ENCODE measurements at regions of chr6 and their contacts with region 1.

Region 1: DNA sequence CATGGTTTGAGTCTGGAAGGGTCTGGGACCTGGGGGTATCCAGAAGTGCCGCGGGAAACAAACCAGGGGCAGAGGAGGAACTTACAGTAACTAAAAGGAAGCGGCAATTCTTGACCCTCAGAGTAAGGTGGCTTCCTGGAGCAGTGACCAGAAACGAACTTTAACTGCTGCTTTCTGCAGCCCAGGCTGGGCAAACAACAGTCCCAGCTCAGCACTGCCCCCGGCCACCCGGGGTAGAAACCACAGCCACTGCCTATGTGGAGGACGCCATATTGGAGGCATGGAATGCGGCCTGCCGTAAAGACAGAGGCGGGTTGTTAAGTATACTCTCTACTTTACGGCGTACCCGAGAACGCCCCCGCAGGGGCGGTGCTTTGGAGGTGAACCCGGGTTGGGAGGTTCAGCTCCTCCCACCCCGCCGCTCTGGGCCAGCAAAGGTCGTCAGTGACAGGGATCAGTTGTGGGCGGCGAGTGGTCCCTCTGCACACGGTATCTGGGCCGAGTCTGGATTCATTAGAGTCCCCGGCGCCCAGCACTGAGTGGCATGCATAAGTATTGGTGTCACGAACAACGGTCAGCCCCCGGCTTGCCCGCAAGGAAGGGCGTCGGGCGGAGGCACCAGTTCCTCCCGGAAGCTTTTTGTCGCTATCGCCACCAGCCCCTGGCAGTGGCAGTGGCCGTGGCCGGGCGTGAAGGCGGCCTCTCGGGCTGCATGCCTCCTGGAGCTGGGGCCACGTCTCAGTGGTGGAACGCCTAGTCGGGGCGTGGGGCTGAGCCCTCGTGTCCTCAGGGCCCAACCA is at the start of gene PDSS2:
- DNase-seq: peak; percentile 93 to 99 (median 96)
- ATAC-seq: peak; percentile 96
- H3K4me3 ChIP-seq: peak within 1 kb of the TSS; percentile 93 to 94
- H3K4me3 Mint-ChIP-seq: peak within 1 kb of the TSS; percentile 98
- H3K27ac ChIP-seq: peak within 1 kb of the TSS; percentile 69 to 82
- H3K27ac Mint-ChIP-seq: peak within 1 kb of the TSS; percentile 98
- H3K4me1 ChIP-seq: peaks cover 14% of the 10 kb centered on the region
- H3K4me1 Mint-ChIP-seq: peaks cover 31% of the 10 kb centered on the region
- H3K27me3 ChIP-seq: no peaks in the 10 kb centered on the region
- H3K27me3 Mint-ChIP-seq: no peaks in the 10 kb centered on the region
- CTCF ChIP-seq: peak; percentile 28
- total RNA-seq, gene PDSS2: 3.7 to 4.7 TPM

Region 2: GRCh38 chr6:106629103-106629858 is 830.2 kb before region 1 on chr6 and contains the starts of genes QRSL1 and RTN4IP1:
- CTCF ChIA-PET with region 1: no interaction called
- POLR2A ChIA-PET with region 1: no interaction called
- intact Hi-C with region 1: loop called in 1 of 2 experiments (anchors 10 kb)
- DNase-seq: peak; percentile 70 to 95 (median 82)
- ATAC-seq: peak; percentile 90
- H3K4me3 ChIP-seq: peak within 1 kb of the TSS; percentile 86 to 93
- H3K4me3 Mint-ChIP-seq: peak within 1 kb of the TSS; percentile 99
- H3K27ac ChIP-seq: peak within 1 kb of the TSS; percentile 83 to 88
- H3K27ac Mint-ChIP-seq: peak within 1 kb of the TSS; percentile 99
- H3K4me1 ChIP-seq: peaks cover 19% of the 10 kb centered on the region
- H3K4me1 Mint-ChIP-seq: peaks cover 43% of the 10 kb centered on the region
- H3K27me3 ChIP-seq: no peaks in the 10 kb centered on the region
- H3K27me3 Mint-ChIP-seq: no peaks in the 10 kb centered on the region
- CTCF ChIP-seq: no peak
- total RNA-seq, gene QRSL1: 11.1 to 11.6 TPM
- total RNA-seq, gene RTN4IP1: 1.8 to 1.9 TPM

Region 3: GRCh38 chr6:107114213-107114905 is 345.1 kb before region 1 on chr6:
- CTCF ChIA-PET with region 1: no interaction called
- POLR2A ChIA-PET with region 1: interaction called, 5 read pairs
- intact Hi-C with region 1: loop called (anchors 2 to 5 kb)
- DNase-seq: peak; percentile 28 to 83 (median 65)
- ATAC-seq: peak; percentile 53
- H3K4me3 ChIP-seq: peak overlapping the region; percentile 12 to 24
- H3K4me3 Mint-ChIP-seq: peak overlapping the region; percentile 83
- H3K27ac ChIP-seq: no peak overlapping the region
- H3K27ac Mint-ChIP-seq: no peak overlapping the region
- H3K4me1 ChIP-seq: peaks cover 11% of the 10 kb centered on the region
- H3K4me1 Mint-ChIP-seq: peaks cover 15% of the 10 kb centered on the region
- H3K27me3 ChIP-seq: peaks cover 0 to 8% of the 10 kb centered on the region in 2 experiments
- H3K27me3 Mint-ChIP-seq: no peaks in the 10 kb centered on the region
- CTCF ChIP-seq: peak; percentile 90

Region 4: GRCh38 chr6:107618672-107619071 is 159.2 kb after region 1 on chr6:
- CTCF ChIA-PET with region 1: no interaction called
- POLR2A ChIA-PET with region 1: interaction called, 6 read pairs
- intact Hi-C with region 1: loop called in 1 of 2 experiments (anchors 1 kb)
- DNase-seq: peak in 8 of 9 experiments; percentile 26 to 82 (median 58)
- ATAC-seq: peak; percentile 95
- H3K4me3 ChIP-seq: no peak overlapping the region
- H3K4me3 Mint-ChIP-seq: peak overlapping the region; percentile 23
- H3K27ac ChIP-seq: peak overlapping the region; percentile 20 to 72
- H3K27ac Mint-ChIP-seq: peak overlapping the region; percentile 84
- H3K4me1 ChIP-seq: peaks cover 37% of the 10 kb centered on the region
- H3K4me1 Mint-ChIP-seq: peaks cover 36% of the 10 kb centered on the region
- H3K27me3 ChIP-seq: no peaks in the 10 kb centered on the region
- H3K27me3 Mint-ChIP-seq: no peaks in the 10 kb centered on the region
- CTCF ChIP-seq: no peak

Region 5: DNA sequence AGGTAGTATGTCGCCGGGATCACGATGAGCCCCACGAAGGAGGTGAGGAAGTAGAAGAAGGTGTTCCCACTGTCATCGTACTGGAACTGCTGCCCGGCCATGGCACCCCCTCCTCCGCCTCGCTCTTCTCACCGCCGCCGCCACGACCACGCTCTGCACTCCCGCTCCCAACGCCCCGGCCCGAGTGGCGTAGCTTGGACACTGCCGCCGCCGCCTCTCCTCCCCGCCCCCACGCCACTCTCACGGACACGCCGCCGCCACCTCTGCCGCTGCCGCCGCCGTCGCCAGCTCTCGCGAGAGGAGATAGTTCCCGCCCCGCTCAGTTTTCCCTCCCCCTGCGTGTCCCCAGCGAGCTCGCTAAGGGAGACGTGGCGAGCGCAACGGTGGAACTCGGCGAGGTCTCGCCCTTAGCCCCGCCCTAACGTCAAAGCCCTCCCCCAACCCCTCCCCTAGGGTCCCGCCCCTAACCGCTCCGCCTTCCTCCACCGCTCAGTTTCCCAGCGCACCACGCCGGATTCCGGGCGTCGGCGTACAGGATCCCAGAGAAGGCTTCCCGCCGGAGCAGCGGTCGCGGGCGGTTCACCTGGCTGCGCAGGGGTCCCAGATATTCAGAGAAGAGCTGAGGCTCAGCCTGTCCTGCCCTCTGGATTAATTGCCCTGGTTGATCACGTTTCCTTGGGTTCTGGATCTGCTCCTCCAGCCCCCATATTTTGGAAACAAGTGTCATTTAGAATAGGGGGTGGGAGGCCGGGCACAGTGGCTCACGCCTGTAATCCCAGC is 498.6 kb after region 1 on chr6 and contains the start of gene SEC63:
- CTCF ChIA-PET with region 1: interaction called, 3 read pairs
- POLR2A ChIA-PET with region 1: no interaction called
- intact Hi-C with region 1: loop called (anchors 1 to 2 kb)
- DNase-seq: peak; percentile 95 to 98 (median 96)
- ATAC-seq: peak; percentile 97
- H3K4me3 ChIP-seq: peak within 1 kb of the TSS; percentile 91
- H3K4me3 Mint-ChIP-seq: peak within 1 kb of the TSS; percentile 98
- H3K27ac ChIP-seq: peak within 1 kb of the TSS; percentile 81 to 82
- H3K27ac Mint-ChIP-seq: peak within 1 kb of the TSS; percentile 92
- H3K4me1 ChIP-seq: peaks cover 16% of the 10 kb centered on the region
- H3K4me1 Mint-ChIP-seq: peaks cover 37% of the 10 kb centered on the region
- H3K27me3 ChIP-seq: no peaks in the 10 kb centered on the region
- H3K27me3 Mint-ChIP-seq: no peaks in the 10 kb centered on the region
- CTCF ChIP-seq: no peak
- total RNA-seq, gene SEC63: 77.8 to 88.2 TPM

Region 6: GRCh38 chr6:108250240-108250866 is 790.9 kb after region 1 on chr6:
- CTCF ChIA-PET with region 1: no interaction called
- POLR2A ChIA-PET with region 1: no interaction called
- intact Hi-C with region 1: loop called in 1 of 2 experiments (anchors 10 kb)
- DNase-seq: peak in 2 of 9 experiments; percentile 22 to 48
- ATAC-seq: peak; percentile 57
- H3K4me3 ChIP-seq: no peak overlapping the region
- H3K4me3 Mint-ChIP-seq: no peak overlapping the region
- H3K27ac ChIP-seq: no peak overlapping the region
- H3K27ac Mint-ChIP-seq: no peak overlapping the region
- H3K4me1 ChIP-seq: peaks cover 6% of the 10 kb centered on the region
- H3K4me1 Mint-ChIP-seq: peaks cover 57% of the 10 kb centered on the region
- H3K27me3 ChIP-seq: no peaks in the 10 kb centered on the region
- H3K27me3 Mint-ChIP-seq: no peaks in the 10 kb centered on the region
- CTCF ChIP-seq: no peak